ENCODE measurements at regions of chr17 and their contacts with region 1.

Region 1: DNA sequence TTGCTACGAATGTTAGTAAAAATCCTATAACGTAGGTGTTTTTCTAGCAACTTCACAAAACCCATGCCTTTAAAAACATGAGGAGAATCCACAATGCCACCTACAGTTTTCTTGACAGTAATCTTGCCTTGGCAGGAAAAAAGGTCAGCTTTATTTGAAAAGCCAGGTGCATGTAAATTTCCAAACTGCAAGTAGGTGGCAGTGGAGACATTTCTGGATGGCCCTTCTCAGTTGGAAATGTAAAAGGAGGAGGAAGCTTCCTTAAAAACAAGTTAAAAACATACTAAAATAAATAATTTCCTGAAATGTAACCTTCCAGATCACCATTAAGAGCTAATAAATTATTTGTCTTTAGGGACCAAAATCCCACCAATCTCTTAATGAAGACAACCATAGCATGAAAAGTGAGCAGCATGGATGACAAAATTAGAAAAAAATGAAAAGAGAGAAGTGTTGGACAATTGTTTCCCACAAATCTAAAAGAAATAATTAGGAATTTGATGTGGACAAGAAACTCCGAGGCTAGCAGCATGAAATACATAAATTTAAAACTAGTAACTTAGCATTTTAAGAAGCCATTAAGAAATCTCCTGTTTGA is 152.2 kb downstream of the SNX11 start:
- DNase-seq: peak; percentile 21 to 75 (median 34)
- ATAC-seq: peak; percentile 43; the same call in 2 of the 3 replicates
- H3K4me3 ChIP-seq: no peak overlapping the region
- H3K27ac ChIP-seq: no peak overlapping the region
- H3K4me1 ChIP-seq: peaks cover 0 to 12% of the 10 kb centered on the region in 2 experiments; a peak in 3 of 5 replicates
- H3K27me3 ChIP-seq: no peaks in the 10 kb centered on the region
- CTCF ChIP-seq: peak; percentile 73 to 91 (median 77)
- EP300 ChIP-seq: no peak
- POLR2A ChIP-seq: no peak
- RAD21 ChIP-seq: peak; percentile 68 to 76

Region 2: GRCh38 chr17:48162946-48163506 is 96.8 kb before region 1 on chr17:
- CTCF ChIA-PET with region 1: no interaction called
- POLR2A ChIA-PET with region 1: no interaction called
- in situ Hi-C with region 1: no loop called
- intact Hi-C with region 1: no loop called
- DNase-seq: no peak
- ATAC-seq: no peak
- H3K4me3 ChIP-seq: no peak overlapping the region
- H3K27ac ChIP-seq: no peak overlapping the region
- H3K4me1 ChIP-seq: peaks cover 0 to 4% of the 10 kb centered on the region in 2 experiments; a peak in 1 of 5 replicates
- H3K27me3 ChIP-seq: no peaks in the 10 kb centered on the region; a peak in 1 of 5 replicates
- CTCF ChIP-seq: no peak
- EP300 ChIP-seq: no peak
- POLR2A ChIP-seq: no peak
- RAD21 ChIP-seq: no peak

Region 3: GRCh38 chr17:48246612-48247011 is 13.2 kb before region 1 on chr17:
- CTCF ChIA-PET with region 1: no interaction called
- POLR2A ChIA-PET with region 1: interaction called, 12 read pairs
- in situ Hi-C with region 1: no loop called
- intact Hi-C with region 1: no loop called
- DNase-seq: peak in 1 of 4 experiments; percentile 43
- ATAC-seq: peak; percentile 41
- H3K4me3 ChIP-seq: no peak overlapping the region
- H3K27ac ChIP-seq: peak overlapping the region; percentile 60; the same call in 2 of the 3 replicates
- H3K4me1 ChIP-seq: peaks cover 5 to 60% of the 10 kb centered on the region in 2 experiments
- H3K27me3 ChIP-seq: no peaks in the 10 kb centered on the region
- CTCF ChIP-seq: no peak
- EP300 ChIP-seq: peak; percentile 51; the same call in 1 of the 2 replicates
- POLR2A ChIP-seq: no peak
- RAD21 ChIP-seq: no peak

Region 4: GRCh38 chr17:48307814-48308411 is 48.1 kb after region 1 on chr17:
- CTCF ChIA-PET with region 1: interaction called, 5 read pairs
- POLR2A ChIA-PET with region 1: no interaction called
- in situ Hi-C with region 1: no loop called
- intact Hi-C with region 1: loop called (anchors 5 kb)
- DNase-seq: peak; percentile 46 to 76 (median 54)
- ATAC-seq: peak; percentile 93
- H3K4me3 ChIP-seq: no peak overlapping the region
- H3K27ac ChIP-seq: no peak overlapping the region
- H3K4me1 ChIP-seq: peaks cover 0 to 8% of the 10 kb centered on the region in 2 experiments; a peak in 4 of 5 replicates
- H3K27me3 ChIP-seq: no peaks in the 10 kb centered on the region
- CTCF ChIP-seq: peak; percentile 81 to 89 (median 82)
- EP300 ChIP-seq: no peak
- POLR2A ChIP-seq: no peak
- RAD21 ChIP-seq: peak; percentile 63 to 75

Region 5: GRCh38 chr17:48374650-48375230 is 114.9 kb after region 1 on chr17:
- CTCF ChIA-PET with region 1: interaction called, 3 read pairs
- POLR2A ChIA-PET with region 1: no interaction called
- in situ Hi-C with region 1: no loop called
- intact Hi-C with region 1: loop called (anchors 5 kb)
- DNase-seq: peak; percentile 41 to 73 (median 65)
- ATAC-seq: peak; percentile 95
- H3K4me3 ChIP-seq: no peak overlapping the region
- H3K27ac ChIP-seq: no peak overlapping the region
- H3K4me1 ChIP-seq: peaks cover 0 to 12% of the 10 kb centered on the region in 2 experiments; a peak in 3 of 5 replicates
- H3K27me3 ChIP-seq: no peaks in the 10 kb centered on the region
- CTCF ChIP-seq: peak; percentile 83 to 89 (median 88)
- EP300 ChIP-seq: no peak
- POLR2A ChIP-seq: no peak
- RAD21 ChIP-seq: peak; percentile 62 to 90

Region 6: GRCh38 chr17:48578616-48579470 is 319.1 kb after region 1 on chr17:
- CTCF ChIA-PET with region 1: no interaction called
- POLR2A ChIA-PET with region 1: no interaction called
- in situ Hi-C with region 1: no loop called
- intact Hi-C with region 1: loop called (anchors 1 kb)
- DNase-seq: peak in 3 of 4 experiments; percentile 57 to 62 (median 60)
- ATAC-seq: peak; percentile 28
- H3K4me3 ChIP-seq: peak overlapping the region; percentile 71
- H3K27ac ChIP-seq: peak overlapping the region; percentile 95
- H3K4me1 ChIP-seq: peaks cover 43 to 51% of the 10 kb centered on the region in 2 experiments
- H3K27me3 ChIP-seq: no peaks in the 10 kb centered on the region
- CTCF ChIP-seq: no peak
- EP300 ChIP-seq: no peak
- POLR2A ChIP-seq: peak; percentile 73
- RAD21 ChIP-seq: 0 out of 4 replicates have a peak, but pooled peaks of 1 of the 2 experiments have one; percentile 1

Measured in K562 (cell line).